PC-3 (cell line): ENCODE measurements at regions of chr5 and their contacts with region 1.

Region 1: DNA sequence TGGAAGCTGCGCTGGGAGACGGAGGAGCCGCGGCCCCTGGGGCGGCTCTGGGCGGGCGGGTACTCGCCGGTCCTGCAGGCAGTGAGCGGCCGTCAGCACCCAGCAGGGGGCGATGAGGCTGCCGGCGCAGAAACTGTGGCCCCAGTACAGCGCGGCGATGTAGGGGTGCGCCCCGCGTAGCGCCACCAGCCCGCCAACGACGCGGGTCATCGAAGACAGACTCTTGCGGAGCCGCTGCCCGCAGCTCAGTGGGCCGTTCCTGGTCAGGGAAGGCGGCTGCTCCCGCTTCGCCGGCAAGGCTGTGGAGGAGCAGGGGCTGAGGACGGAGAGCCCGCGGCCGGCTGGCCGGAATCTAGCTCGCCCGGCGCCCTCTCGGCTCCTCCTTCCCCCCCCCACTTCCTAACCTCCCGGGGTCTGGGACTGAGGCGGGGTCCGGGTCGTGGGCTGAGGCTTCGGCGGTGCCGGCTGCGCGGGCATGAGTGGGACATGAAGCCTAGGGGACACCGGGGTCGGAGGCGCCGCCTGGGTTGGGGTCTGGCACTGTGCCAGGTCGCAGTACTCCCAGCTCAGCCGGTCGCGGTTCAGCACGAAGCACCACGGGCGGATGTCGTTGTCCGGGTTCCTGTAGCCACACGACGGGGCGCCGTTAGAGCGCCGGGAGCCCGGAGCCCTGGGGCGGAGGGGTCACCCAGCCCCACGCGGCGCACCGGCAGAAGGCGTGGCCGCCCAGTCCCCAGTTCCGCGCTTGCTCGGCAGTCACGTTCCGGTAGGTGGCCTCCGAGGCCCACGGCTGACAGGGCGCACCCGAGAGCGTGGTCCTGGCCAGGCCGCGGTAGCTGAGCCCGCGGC is 3.6 kb upstream of the PFN3 start:
- DNase-seq: peak; percentile 83
- ATAC-seq: peak; percentile 71
- H3K4me3 ChIP-seq: peak overlapping the region; percentile 80
- H3K27ac ChIP-seq: 0 out of 2 replicates have a peak overlapping the region, but pooled peaks have one; percentile 14
- H3K4me1 ChIP-seq: peaks cover 13% of the 10 kb centered on the region
- H3K27me3 ChIP-seq: no peaks in the 10 kb centered on the region
- CTCF ChIP-seq: peak; percentile 66

Region 2: DNA sequence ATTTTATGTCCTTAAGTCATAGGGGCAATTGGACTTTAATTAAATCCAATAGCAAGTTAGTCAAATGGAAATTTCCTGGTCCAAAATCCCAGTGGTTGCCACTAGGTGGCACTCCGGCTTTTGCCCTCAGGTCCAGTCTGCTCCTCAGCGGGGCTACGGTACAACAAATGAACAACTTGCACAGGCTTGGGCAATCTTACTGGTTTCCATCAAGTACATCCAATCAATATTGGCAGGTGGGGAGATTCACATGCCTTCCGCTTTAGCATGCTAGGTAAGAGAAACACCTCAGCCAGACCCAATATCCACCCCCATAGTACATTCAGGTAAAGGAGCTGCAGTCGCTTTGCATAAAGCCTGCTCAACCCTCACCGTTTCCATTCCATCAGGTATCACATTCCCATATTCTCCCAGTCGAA is 86.0 kb before region 1 on chr5:
- CTCF ChIA-PET with region 1: interaction called, 7 read pairs
- POLR2A ChIA-PET with region 1: no interaction called
- intact Hi-C with region 1: loop called (anchors 1 kb)
- DNase-seq: peak; percentile 95
- ATAC-seq: peak; percentile 76
- H3K4me3 ChIP-seq: no peak overlapping the region
- H3K27ac ChIP-seq: no peak overlapping the region
- H3K4me1 ChIP-seq: peaks cover 3% of the 10 kb centered on the region
- H3K27me3 ChIP-seq: no peaks in the 10 kb centered on the region
- CTCF ChIP-seq: peak; percentile 99

Region 3: GRCh38 chr5:177390363-177391300 is 13.4 kb before region 1 on chr5:
- CTCF ChIA-PET with region 1: interaction called, 22 read pairs
- POLR2A ChIA-PET with region 1: interaction called, 3 read pairs
- intact Hi-C with region 1: loop called (anchors 1 kb)
- DNase-seq: peak; percentile 95
- ATAC-seq: peak; percentile 73
- H3K4me3 ChIP-seq: peak overlapping the region; percentile 24; the same call in 1 of the 2 replicates
- H3K27ac ChIP-seq: peak overlapping the region; percentile 95
- H3K4me1 ChIP-seq: peaks cover 27% of the 10 kb centered on the region
- H3K27me3 ChIP-seq: no peaks in the 10 kb centered on the region
- CTCF ChIP-seq: peak; percentile 93

Region 4: GRCh38 chr5:177446200-177447065 is 42.4 kb after region 1 on chr5 and contains the start of gene PRR7:
- CTCF ChIA-PET with region 1: interaction called, 13 read pairs
- POLR2A ChIA-PET with region 1: no interaction called
- intact Hi-C with region 1: no loop called
- DNase-seq: peak; percentile 79
- ATAC-seq: peak; percentile 36
- H3K4me3 ChIP-seq: peak within 1 kb of the TSS; percentile 82
- H3K27ac ChIP-seq: peak within 1 kb of the TSS; percentile 85
- H3K4me1 ChIP-seq: peaks cover 23% of the 10 kb centered on the region
- H3K27me3 ChIP-seq: no peaks in the 10 kb centered on the region
- CTCF ChIP-seq: no peak
- total RNA-seq, gene PRR7: 40.6 and 47.2 TPM in 2 replicates

Region 5: DNA sequence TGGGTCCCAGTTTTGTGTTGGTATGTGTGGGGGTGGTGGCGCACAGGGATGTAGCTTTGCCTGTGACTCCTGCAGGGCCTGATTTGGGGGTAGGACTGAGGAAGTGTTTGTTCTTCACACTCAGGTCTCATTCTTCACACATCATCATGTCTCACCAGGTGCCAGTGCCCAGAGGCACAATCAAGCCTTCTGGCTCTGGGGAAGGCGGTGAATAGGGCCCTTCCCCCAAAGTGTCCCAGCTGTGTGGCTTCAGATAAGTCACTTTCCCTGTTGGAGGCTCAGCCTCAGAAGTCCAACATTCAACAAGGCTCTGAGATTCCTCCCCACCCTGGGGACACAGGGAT is 64.3 kb after region 1 on chr5:
- CTCF ChIA-PET with region 1: no interaction called
- POLR2A ChIA-PET with region 1: no interaction called
- intact Hi-C with region 1: no loop called
- DNase-seq: no peak
- ATAC-seq: no peak
- H3K4me3 ChIP-seq: no peak overlapping the region
- H3K27ac ChIP-seq: no peak overlapping the region
- H3K4me1 ChIP-seq: peaks cover 21% of the 10 kb centered on the region
- H3K27me3 ChIP-seq: no peaks in the 10 kb centered on the region
- CTCF ChIP-seq: no peak

Region 6: DNA sequence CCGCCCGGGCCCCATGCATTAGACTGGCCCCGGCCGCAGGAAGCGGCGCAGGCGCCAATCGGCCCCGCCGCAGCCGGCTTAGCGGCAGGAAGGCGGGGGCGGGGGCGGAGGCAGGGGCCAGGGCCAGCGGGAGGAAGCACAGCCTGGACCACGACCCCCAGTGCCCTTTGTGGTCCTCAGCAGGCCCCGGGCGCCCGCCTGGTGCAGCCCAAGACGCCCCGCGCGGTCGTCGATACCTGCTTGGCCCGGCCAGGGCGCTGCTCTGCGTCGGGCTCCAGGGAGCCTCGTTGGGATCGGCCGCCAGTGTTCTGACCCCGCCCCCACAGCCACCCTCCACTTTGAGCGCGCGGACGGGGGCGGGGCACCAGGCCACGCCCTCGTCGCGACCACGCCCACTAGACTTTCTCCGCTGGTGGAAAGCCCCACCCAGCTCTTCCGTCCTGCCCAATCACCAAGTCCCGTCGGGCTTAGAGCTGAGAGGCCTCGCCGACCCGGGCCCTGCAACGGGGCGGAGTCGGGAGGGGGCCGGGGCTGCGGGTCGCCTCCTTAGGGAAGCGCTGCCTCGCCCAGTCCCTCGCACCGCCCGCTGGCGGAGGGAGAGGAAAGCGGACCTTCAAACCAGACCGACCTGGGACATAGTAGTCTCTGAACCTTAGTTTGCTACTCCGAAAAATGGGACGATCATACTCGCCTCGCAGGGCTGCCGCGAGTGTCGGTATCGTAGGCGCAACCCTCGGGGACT is 93.4 kb after region 1 on chr5 and contains the start of gene PDLIM7:
- CTCF ChIA-PET with region 1: interaction called, 7 read pairs
- POLR2A ChIA-PET with region 1: no interaction called
- intact Hi-C with region 1: loop called (anchors 1 kb)
- DNase-seq: peak; percentile 98
- ATAC-seq: peak; percentile 66
- H3K4me3 ChIP-seq: peak within 1 kb of the TSS; percentile 76
- H3K27ac ChIP-seq: peak within 1 kb of the TSS; percentile 93
- H3K4me1 ChIP-seq: peaks cover 41% of the 10 kb centered on the region
- H3K27me3 ChIP-seq: no peaks in the 10 kb centered on the region
- CTCF ChIP-seq: peak; percentile 24; the same call in 1 of the 2 replicates
- total RNA-seq, gene PDLIM7: 159 and 195 TPM in 2 replicates